ENCODE measurements at regions of chr18 and their contacts with region 1.

Region 1: DNA sequence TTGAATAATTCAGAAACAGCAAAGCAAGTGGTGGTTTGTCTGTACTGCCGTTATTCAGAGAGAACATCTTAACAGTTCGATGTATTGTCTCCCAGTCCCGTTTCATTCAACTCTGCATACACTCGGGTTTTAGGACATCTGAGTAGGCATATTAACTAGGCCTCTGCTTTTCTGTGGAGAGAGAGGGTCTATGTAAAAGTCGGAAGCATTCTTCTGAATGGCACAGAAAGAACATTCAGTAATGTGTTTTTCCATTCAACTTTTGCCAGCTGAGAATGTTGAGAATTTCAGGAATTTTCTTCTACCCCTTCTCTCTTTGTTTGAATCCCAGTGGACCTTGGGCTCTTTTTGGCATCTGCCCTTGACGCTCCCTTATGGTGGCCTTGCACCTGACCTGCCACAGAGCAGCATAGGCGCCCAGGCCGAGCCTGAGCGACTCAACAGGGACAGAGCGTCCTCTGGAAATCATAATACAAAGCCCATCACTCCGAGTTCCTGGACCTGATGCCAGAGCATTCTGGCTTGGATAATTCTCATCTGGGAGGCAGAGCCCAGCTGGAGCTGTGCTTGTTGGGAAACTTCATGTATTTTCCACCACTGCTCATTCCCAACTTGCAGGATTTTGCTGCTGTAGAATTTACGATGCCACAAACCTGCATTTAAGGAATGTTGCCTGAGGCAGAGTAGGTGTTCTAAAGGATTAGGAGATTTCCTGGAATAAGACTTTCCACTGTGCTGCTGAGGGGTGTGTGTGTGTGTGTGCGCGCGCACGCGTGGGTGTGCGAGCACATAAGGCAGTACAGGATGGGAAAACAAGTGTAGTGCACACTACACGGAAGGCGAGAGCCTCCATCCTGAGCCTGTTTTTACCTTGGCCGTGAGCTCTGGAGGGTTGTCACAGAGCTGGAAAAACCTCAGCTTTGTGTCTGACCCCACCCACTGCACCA is 77.2 kb upstream of the TXNDC2 start:
- DNase-seq: no peak
- ATAC-seq: peak; percentile 32 to 37

Region 2: GRCh38 chr18:9839853-9840252 is 31.3 kb after region 1 on chr18:
- intact Hi-C with region 1: loop called in 1 of 2 experiments (anchors 5 kb)
- DNase-seq: no peak
- ATAC-seq: no peak

Region 3: DNA sequence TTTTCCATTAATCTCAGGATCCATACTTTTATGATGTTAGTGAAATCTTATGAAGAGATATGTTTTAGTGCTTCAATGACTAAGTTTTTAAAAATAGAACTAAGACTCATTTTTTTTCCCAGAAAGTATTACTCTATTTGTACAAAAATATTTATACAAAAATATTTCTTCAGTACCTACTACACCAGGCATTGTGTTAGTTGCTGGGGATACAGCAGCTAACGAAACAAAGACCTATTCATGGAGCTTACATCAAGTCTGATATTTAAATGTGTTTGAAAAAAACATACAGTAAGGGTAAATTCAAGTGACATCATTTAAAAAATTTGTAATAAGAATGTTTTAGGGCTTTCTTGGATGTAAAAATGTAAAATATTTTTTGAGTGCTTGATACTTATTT is 116.8 kb after region 1 on chr18:
- intact Hi-C with region 1: loop called in 1 of 2 experiments (anchors 10 kb)
- DNase-seq: no peak
- ATAC-seq: peak in 1 of 2 donors; percentile 48

Region 4: DNA sequence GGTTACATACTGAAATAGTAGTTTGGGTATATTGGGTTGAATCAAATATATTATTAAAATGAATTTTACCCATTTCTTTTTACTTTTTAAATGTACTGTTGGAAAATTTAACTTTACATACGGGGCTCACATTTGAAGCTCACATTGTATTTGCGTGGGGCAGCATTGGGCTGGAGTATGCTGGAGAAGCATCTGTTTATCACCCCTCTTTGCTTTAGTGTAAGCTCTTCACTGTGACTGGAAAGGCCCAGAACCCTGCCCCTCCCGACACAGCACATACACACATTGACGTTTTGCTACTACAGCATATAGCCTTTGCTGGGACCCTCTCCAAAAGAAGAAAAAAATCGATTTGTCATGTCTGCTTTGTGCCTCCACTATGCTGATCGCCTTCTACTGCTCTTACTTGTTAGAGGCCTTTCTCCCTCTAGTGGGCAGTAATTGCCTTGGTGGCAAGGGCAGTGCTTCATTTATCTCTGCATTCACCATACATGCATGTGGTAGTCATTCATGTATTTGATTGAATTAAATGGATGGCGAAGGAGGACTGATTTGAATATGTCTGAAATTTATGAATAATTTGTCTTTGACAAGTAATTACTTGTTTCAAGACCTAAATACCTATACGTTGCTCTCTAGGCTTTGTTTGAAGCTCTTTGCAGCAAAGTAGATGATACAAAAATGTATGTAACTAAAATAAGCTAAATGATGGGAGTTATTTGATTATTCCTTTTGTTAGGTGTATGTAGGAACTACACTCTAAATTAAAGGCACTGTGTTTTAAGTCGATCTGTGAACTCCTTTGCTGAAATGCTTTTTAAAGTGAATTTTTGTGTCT is 142.7 kb after region 1 on chr18:
- intact Hi-C with region 1: loop called in 1 of 2 experiments (anchors 10 kb)
- DNase-seq: no peak
- ATAC-seq: peak; percentile 71 to 78

Region 5: DNA sequence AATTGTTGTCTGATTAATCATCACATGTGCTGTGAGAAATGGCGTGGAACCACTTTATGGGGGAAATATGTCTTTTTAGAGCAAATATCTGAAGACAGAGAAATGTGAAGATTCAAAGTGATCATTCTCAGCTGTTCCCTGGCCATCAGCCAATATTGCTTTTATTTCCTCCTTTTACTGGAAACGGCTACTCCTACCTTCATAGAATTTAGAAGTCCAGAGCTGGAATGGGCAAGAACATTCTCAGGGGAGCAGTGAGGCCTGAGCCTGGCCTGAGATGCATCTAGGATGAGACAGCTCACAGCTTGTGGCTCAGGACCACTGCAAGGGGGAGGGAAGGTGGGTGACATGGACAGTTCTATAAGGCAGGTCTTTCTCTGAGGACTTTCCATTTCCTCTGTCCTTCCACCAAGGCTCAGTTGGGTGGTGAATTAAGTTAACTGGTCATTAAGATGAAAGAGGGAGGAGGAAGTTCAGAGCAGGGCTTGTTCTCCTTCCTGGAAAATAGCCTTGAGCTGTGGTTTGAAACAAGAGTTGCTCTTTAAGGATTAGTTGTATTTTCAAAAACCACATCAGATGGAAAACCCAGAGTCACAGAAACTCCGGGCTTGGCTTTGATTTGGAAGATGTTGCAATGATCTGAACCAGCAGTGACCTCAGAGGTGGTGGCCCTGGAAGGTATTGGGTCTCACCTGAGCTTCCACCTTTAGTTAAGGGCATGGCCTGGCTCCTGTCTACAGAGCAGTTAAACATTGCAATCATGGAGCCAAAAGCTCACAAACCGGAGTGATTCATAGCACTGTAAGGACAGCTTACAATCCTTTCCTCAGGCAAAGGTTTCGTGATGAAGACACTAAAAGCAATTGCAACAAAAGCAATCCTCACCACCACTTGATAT is 249.6 kb after region 1 on chr18:
- intact Hi-C with region 1: no loop called
- DNase-seq: no peak
- ATAC-seq: peak in 1 of 2 donors; percentile 33

Measured in left cardiac atrium (tissue), 4 donors.